ENCODE measurements at regions of chrX and their contacts with region 1.

Region 1: GRCh38 chrX:49840679-49841078 is 11.6 kb downstream of the PAGE4 start:
- DNase-seq: peak; percentile 17 to 63
- H3K4me3 ChIP-seq: no peak overlapping the region
- H3K27ac ChIP-seq: no peak overlapping the region; the same call in 1 of the 2 replicates
- H3K4me1 ChIP-seq: no peaks in the 10 kb centered on the region
- H3K27me3 ChIP-seq: no peaks in the 10 kb centered on the region
- CTCF ChIP-seq: peak; percentile 57 to 74 (median 68)
- EP300 ChIP-seq: no peak
- POLR2A ChIP-seq: no peak
- RAD21 ChIP-seq: peak; percentile 31 to 41; a peak in 3 of 4 replicates

Region 2: DNA sequence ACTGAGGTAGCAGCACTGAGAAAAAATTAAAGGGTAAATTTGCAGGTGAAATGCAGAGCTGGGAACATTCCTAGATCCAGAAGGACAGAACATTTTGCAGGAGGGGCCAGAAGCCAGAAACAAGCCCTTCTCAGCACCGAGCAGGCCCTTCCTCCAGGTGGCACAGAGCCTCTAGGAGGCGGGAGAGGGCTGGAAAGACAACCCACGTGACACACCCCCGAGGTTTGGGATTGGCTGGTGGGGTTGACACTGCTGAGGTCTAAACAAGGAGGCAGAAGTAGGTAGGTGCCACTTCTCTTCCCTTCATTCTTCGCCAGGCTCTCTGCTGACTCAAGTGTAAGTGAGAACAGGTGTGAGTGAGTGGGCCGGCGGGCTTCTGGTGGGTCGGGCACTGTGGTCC is 11.7 kb before region 1 on chrX and contains the start of gene PAGE4:
- CTCF ChIA-PET with region 1: interaction called, 32 read pairs
- POLR2A ChIA-PET with region 1: no interaction called
- DNase-seq: no peak
- H3K4me3 ChIP-seq: no peak within 1 kb of the TSS
- H3K27ac ChIP-seq: no peak within 1 kb of the TSS
- H3K4me1 ChIP-seq: no peaks in the 10 kb centered on the region
- H3K27me3 ChIP-seq: no peaks in the 10 kb centered on the region
- CTCF ChIP-seq: peak in 1 of 3 experiments; percentile 9; a peak in 1 of 4 replicates
- EP300 ChIP-seq: no peak
- POLR2A ChIP-seq: no peak
- RAD21 ChIP-seq: no peak
- total RNA-seq, gene PAGE4: not detected in 2 replicates

Region 3: DNA sequence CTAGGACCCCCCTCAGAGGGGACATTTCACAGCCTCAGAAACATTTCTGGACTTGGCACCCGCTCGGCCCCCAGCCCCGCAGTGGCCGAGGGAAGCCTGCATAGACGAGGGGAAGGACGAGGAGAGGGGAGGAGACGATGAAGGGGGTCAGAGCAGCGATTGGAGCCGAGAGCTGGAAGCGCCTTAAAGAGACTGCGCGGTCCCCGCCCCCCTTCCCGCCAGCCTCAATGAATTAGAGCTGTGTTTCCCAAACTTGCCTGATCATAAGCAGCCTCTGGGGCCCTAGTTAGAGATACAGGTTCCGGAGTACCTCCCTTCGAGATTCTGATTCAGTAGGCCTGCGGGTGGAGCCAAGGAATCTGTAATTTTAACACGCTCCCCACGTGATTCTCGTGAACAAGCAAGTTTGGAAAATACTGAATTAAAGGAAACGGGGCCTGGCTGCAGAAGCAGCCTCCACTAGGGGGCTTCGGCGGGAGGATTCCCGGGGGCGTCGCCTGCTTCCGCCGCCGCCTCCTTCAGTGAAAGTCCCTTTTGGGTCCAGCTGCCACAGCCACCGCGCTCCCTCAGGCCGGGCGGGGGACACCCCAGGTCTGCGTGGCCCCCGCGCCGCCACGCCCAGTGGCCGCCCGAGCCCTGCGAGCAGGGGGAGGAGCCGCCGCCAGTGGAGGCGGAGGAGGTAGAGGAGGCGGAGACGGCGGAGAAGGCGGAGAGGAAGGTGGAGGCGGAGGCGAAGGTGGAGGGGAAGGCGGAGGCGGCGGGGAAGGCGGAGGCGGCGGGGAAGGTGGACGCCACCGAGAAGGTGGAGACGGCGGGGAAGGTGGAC is 38.4 kb after region 1 on chrX and contains the start of gene USP27X:
- CTCF ChIA-PET with region 1: interaction called, 31 read pairs
- POLR2A ChIA-PET with region 1: no interaction called
- DNase-seq: peak; percentile 17 to 65
- H3K4me3 ChIP-seq: peak within 1 kb of the TSS; percentile 43 to 82 (median 60)
- H3K27ac ChIP-seq: no peak within 1 kb of the TSS; the same call in 1 of the 2 replicates
- H3K4me1 ChIP-seq: peaks cover 0 to 5% (median 3%) of the 10 kb centered on the region in 4 experiments; a peak in 3 of 7 replicates
- H3K27me3 ChIP-seq: no peaks in the 10 kb centered on the region; a peak in 3 of 7 replicates
- CTCF ChIP-seq: peak; percentile 33 to 38 (median 35)
- EP300 ChIP-seq: no peak
- POLR2A ChIP-seq: peak in 1 of 2 experiments; percentile 34; a peak in 1 of 3 replicates
- RAD21 ChIP-seq: no peak
- total RNA-seq, gene USP27X: 4.7 and 5.7 TPM in 2 replicates

Region 4: DNA sequence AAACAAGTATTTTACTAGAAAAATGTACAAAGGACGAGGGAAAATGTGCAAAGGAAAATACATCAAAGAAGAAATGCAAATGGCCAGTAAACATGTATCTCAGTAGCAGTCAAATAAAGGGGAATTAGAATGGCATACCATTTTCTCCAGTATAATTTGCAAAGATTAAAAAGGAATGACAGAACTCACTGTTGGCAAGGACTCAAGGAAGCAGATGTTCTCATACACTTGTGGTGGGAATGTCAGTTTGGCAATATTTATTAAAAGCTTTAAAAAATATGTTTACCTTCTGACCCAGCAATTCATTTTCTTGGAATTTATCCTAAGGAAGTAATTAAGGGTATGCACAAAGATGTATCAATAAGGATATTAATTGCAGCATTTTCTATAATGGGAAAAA is 89.4 kb after region 1 on chrX:
- CTCF ChIA-PET with region 1: no interaction called
- POLR2A ChIA-PET with region 1: no interaction called
- DNase-seq: no peak
- H3K4me3 ChIP-seq: no peak overlapping the region
- H3K27ac ChIP-seq: no peak overlapping the region
- H3K4me1 ChIP-seq: no peaks in the 10 kb centered on the region
- H3K27me3 ChIP-seq: no peaks in the 10 kb centered on the region
- CTCF ChIP-seq: no peak
- EP300 ChIP-seq: no peak
- POLR2A ChIP-seq: no peak
- RAD21 ChIP-seq: no peak

Region 5: GRCh38 chrX:50067435-50068284 is 227.0 kb after region 1 on chrX:
- CTCF ChIA-PET with region 1: no interaction called
- POLR2A ChIA-PET with region 1: no interaction called
- DNase-seq: peak; percentile 15 to 51
- H3K4me3 ChIP-seq: peak overlapping the region; percentile 8 to 55 (median 15); a peak in 5 of 8 replicates
- H3K27ac ChIP-seq: peak overlapping the region; percentile 82
- H3K4me1 ChIP-seq: peaks cover 0 to 5% (median 3%) of the 10 kb centered on the region in 4 experiments; a peak in 3 of 7 replicates
- H3K27me3 ChIP-seq: no peaks in the 10 kb centered on the region
- CTCF ChIP-seq: peak in 1 of 3 experiments; percentile 20; a peak in 1 of 4 replicates
- EP300 ChIP-seq: no peak
- POLR2A ChIP-seq: peak in 1 of 2 experiments; percentile 40; a peak in 1 of 3 replicates
- RAD21 ChIP-seq: no peak